Cardiac septum (tissue), 1 donor: ENCODE measurements at regions of chr9 and their contacts with region 1.

Region 1: GRCh38 chr9:30258079-30258478 is 2126.4 kb upstream of the ACO1 start:
- DNase-seq: no peak

Region 2: DNA sequence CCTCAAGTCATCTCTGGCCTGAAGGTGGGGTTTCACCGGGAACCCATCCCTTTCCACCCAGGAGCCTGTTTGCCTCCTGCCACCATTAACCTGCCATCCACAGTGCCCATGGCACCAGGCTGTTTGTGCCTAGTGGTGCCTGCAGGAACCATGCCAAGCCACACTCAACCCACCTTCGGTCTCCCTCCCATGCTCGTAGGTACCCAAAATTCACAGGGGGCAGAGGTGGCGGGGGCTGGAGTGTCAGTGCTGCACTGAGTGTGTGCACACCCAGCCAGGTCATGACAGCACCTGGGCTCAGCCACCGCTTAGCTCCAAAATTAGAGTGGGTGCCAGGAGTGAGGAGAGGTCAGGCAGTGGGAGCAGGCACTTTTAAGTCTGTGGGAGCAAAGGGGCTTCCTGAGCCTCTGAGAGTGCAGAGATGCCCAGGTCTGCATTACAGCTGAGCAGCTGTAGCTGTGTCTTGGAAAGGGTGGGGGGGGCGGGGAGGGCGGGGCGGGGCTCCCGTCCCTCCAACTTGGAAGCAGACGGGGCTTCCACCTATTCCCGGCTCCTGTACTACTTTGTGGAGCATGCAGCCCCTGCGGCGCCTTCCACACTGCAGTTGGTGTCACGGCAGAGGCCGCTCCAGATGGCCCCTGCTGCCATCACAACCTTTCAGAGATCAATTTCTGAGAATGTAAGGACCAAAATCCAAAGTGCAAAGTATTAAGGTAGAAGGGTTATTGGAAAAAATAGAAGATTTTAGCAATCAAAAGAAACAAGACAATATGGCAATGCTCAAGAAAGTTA is 288.0 kb before region 1 on chr9:
- intact Hi-C with region 1: no loop called
- DNase-seq: no peak

Region 3: DNA sequence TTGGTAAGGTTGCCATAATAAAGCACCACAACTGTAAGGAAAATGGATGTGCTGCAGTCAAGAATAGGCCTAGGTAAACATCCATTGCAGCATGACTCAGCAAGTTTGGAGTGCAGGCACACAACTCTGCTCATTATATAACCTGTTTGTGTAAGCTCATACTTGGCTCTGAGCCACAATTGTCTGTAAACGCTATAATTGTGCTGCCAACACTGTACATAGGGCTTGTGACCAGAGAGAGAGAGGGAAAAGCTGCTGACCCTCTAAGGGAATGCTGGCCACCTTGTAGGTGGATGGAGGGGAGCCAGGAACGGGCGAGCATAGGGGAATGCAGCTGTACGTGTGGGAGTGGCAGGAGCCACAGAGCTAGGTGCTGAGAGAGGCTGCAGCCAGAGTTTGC is 60.1 kb before region 1 on chr9:
- intact Hi-C with region 1: loop called (anchors 10 kb)
- DNase-seq: no peak